ENCODE measurements at regions of chr1 and their contacts with region 1.

Region 1: DNA sequence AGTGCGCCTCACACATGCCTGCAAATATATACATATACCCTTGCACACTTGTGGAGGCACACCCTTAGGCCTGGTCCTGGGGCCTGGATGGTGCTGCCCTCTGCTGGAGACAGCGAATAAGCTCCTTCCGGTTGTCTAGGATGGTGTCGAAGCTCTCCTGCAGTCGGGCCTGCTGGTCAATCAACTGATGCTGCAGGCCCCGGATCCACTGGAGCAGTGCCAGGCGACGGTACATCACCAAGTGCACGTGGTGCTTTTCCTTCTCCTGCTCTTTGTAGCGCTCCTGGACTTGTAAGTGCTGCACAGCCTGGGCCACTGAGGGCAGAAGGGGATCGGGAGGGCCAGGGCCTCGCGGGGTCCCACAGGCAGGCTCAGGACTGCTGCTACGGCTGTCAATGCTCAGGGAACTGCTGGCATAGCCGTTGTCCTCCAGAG is 3.1 kb downstream of the C1orf216 start:
- DNase-seq: peak; percentile 86
- ATAC-seq: peak; percentile 69
- H3K4me3 Mint-ChIP-seq: no peak overlapping the region
- H3K27ac Mint-ChIP-seq: peak overlapping the region; percentile 70; the same call in 1 of the 2 replicates
- H3K4me1 Mint-ChIP-seq: peaks cover 24% of the 10 kb centered on the region
- H3K27me3 Mint-ChIP-seq: peaks cover 14% of the 10 kb centered on the region
- CTCF ChIP-seq: peak; percentile 73

Region 2: GRCh38 chr1:35564037-35564883 is 151.3 kb before region 1 on chr1:
- CTCF ChIA-PET with region 1: interaction called, 49 read pairs
- POLR2A ChIA-PET with region 1: no interaction called
- DNase-seq: peak; percentile 92
- ATAC-seq: peak; percentile 81
- H3K4me3 Mint-ChIP-seq: no peak overlapping the region
- H3K27ac Mint-ChIP-seq: peak overlapping the region; percentile 58
- H3K4me1 Mint-ChIP-seq: peaks cover 6% of the 10 kb centered on the region
- H3K27me3 Mint-ChIP-seq: peaks cover 5% of the 10 kb centered on the region
- CTCF ChIP-seq: peak; percentile 72

Region 3: DNA sequence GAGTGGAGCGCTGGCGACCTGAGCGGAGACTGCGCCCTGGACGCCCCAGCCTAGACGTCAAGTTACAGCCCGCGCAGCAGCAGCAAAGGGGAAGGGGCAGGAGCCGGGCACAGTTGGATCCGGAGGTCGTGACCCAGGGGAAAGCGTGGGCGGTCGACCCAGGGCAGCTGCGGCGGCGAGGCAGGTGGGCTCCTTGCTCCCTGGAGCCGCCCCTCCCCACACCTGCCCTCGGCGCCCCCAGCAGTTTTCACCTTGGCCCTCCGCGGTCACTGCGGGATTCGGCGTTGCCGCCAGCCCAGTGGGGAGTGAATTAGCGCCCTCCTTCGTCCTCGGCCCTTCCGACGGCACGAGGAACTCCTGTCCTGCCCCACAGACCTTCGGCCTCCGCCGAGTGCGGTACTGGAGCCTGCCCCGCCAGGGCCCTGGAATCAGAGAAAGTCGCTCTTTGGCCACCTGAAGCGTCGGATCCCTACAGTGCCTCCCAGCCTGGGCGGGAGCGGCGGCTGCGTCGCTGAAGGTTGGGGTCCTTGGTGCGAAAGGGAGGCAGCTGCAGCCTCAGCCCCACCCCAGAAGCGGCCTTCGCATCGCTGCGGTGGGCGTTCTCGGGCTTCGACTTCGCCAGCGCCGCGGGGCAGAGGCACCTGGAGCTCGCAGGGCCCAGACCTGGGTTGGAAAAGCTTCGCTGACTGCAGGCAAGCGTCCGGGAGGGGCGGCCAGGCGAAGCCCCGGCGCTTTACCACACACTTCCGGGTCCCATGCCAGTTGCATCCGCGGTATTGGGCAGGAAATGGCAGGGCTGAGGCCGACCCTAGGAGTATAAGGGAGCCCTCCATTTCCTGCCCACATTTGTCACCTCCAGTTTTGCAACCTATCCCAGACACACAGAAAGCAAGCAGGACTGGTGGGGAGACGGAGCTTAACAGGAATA is 138.2 kb before region 1 on chr1:
- CTCF ChIA-PET with region 1: interaction called, 32 read pairs
- POLR2A ChIA-PET with region 1: interaction called, 3 read pairs
- DNase-seq: peak; percentile 54
- ATAC-seq: peak; percentile 29
- H3K4me3 Mint-ChIP-seq: peak overlapping the region; percentile 74
- H3K27ac Mint-ChIP-seq: no peak overlapping the region
- H3K4me1 Mint-ChIP-seq: peaks cover 38% of the 10 kb centered on the region
- H3K27me3 Mint-ChIP-seq: peaks cover 79% of the 10 kb centered on the region
- CTCF ChIP-seq: no peak

Region 4: GRCh38 chr1:35668506-35668905 is 47.1 kb before region 1 on chr1:
- CTCF ChIA-PET with region 1: interaction called, 16 read pairs
- POLR2A ChIA-PET with region 1: no interaction called
- DNase-seq: no peak
- ATAC-seq: no peak
- H3K4me3 Mint-ChIP-seq: no peak overlapping the region
- H3K27ac Mint-ChIP-seq: no peak overlapping the region
- H3K4me1 Mint-ChIP-seq: peaks cover 12% of the 10 kb centered on the region
- H3K27me3 Mint-ChIP-seq: peaks cover 8% of the 10 kb centered on the region
- CTCF ChIP-seq: no peak

Region 5: DNA sequence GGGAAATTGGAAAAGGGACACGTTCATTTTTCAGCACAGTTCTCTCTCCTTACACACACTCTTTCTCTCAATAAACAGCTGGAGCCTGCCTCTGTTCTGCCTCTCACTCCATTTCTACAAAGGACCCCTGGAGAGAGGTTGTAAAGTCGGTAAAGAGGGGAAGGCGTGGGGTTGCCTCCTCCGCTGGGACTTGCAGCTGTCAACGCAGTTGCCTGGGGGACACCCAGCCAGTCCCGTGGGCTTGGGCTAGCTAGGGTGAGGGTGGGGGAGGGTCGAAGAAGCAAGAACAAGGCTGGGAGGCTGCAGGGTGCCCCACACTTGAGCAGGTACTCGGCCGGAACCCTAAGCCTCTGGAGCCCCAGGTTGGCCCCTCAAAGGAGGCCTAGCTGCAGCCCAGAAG is 24.5 kb before region 1 on chr1:
- CTCF ChIA-PET with region 1: interaction called, 11 read pairs
- POLR2A ChIA-PET with region 1: no interaction called
- DNase-seq: peak; percentile 20
- ATAC-seq: peak; percentile 72
- H3K4me3 Mint-ChIP-seq: no peak overlapping the region
- H3K27ac Mint-ChIP-seq: no peak overlapping the region
- H3K4me1 Mint-ChIP-seq: peaks cover 24% of the 10 kb centered on the region
- H3K27me3 Mint-ChIP-seq: peaks cover 4% of the 10 kb centered on the region; the same call in 1 of the 2 replicates
- CTCF ChIP-seq: no peak

Region 6: GRCh38 chr1:35769188-35769758 is 53.7 kb after region 1 on chr1:
- CTCF ChIA-PET with region 1: interaction called, 14 read pairs
- POLR2A ChIA-PET with region 1: interaction called, 5 read pairs
- DNase-seq: peak; percentile 92
- ATAC-seq: peak; percentile 75
- H3K4me3 Mint-ChIP-seq: peak overlapping the region; percentile 99
- H3K27ac Mint-ChIP-seq: peak overlapping the region; percentile 79
- H3K4me1 Mint-ChIP-seq: peaks cover 3% of the 10 kb centered on the region; the same call in 1 of the 2 replicates
- H3K27me3 Mint-ChIP-seq: no peaks in the 10 kb centered on the region; the same call in 1 of the 2 replicates
- CTCF ChIP-seq: no peak

Region 7: DNA sequence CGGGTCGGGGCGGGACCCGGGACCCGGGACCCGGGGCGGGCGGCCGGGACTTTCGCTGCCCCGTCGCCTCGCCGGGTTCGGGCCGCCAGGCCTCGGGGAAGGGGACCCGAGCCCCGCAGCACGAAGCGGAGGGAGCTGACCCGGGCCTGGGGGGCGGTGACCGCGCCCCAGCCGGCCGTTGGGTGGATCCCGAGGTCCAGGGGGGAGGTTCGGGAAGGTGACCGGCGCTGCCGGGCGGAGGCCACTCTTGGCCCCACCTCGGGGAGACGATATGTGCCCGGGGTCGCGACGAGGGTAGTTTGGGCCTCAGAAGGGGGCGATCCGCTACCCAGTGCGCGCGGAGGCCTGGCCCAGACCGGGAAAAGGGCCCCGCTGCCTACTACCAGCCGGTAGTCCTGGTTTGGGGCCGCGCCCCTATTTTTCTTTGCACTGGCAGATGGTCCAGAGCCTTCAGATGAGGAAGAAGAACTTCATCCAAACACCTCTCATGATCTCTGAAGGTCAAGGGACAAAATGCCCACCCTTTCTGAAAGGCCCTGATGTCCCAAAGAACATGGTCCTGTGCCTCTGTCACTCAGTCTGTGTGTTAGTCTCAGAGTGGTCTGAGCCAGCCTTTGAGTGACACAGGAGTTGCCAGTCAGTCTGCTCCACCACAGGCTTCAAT is 93.0 kb after region 1 on chr1:
- CTCF ChIA-PET with region 1: no interaction called
- POLR2A ChIA-PET with region 1: no interaction called
- DNase-seq: peak; percentile 38
- ATAC-seq: peak; percentile 48
- H3K4me3 Mint-ChIP-seq: peak overlapping the region; percentile 87
- H3K27ac Mint-ChIP-seq: no peak overlapping the region
- H3K4me1 Mint-ChIP-seq: peaks cover 11% of the 10 kb centered on the region
- H3K27me3 Mint-ChIP-seq: no peaks in the 10 kb centered on the region; the same call in 1 of the 2 replicates
- CTCF ChIP-seq: no peak